ENCODE measurements at regions of chr3 and their contacts with region 1.

Region 1: GRCh38 chr3:97821810-97822775 is at the start of gene CRYBG3:
- DNase-seq: peak in 1 of 2 experiments; percentile 85
- H3K4me3 ChIP-seq: peak within 1 kb of the TSS; percentile 42 to 88 (median 82)
- H3K27ac ChIP-seq: no peak within 1 kb of the TSS
- H3K4me1 ChIP-seq: no peaks in the 10 kb centered on the region
- H3K27me3 ChIP-seq: peaks cover 0 to 22% (median 9%) of the 10 kb centered on the region in 4 experiments; a peak in 5 of 7 replicates
- CTCF ChIP-seq: peak; percentile 11 to 19 (median 15); a peak in 3 of 4 replicates
- EP300 ChIP-seq: no peak
- POLR2A ChIP-seq: peak in 1 of 2 experiments; percentile 74; a peak in 2 of 3 replicates
- RAD21 ChIP-seq: no peak
- total RNA-seq, gene CRYBG3: 8.0 and 9.6 TPM in 2 replicates

Region 2: DNA sequence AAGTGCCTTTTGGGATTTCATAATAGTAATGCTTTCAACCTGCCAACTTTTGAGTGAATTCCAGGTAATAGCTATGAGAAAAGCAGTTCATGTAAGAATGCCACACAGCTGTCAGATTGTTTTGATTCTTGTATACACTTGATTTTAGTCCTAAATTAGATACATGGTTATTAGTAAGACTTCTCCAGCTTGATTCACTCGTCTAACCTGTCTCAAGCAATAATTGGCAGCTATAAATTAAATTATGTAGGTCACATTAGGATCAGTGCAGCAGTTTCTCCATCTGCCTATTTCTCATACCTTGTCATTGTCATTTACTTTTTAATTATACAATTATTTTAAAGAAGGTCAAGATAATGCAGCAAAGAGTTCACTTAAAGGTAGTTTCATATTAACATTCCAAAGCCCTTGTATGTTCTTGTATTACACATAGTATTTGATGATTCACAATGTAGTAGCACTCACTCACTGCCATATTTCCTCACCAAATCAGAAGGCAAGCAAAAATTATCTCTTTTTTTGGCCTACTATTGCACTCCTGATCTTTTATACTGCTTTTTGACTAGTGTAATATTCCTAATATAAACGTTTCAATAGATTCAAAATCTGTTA is 11.2 kb before region 1 on chr3:
- CTCF ChIA-PET with region 1: interaction called, 12 read pairs
- POLR2A ChIA-PET with region 1: interaction called, 4 read pairs
- DNase-seq: no peak
- H3K4me3 ChIP-seq: no peak overlapping the region
- H3K27ac ChIP-seq: no peak overlapping the region
- H3K4me1 ChIP-seq: no peaks in the 10 kb centered on the region
- H3K27me3 ChIP-seq: no peaks in the 10 kb centered on the region
- CTCF ChIP-seq: no peak
- EP300 ChIP-seq: no peak
- POLR2A ChIP-seq: no peak
- RAD21 ChIP-seq: no peak

Region 3: GRCh38 chr3:97838393-97838792 is 16.3 kb after region 1 on chr3:
- CTCF ChIA-PET with region 1: interaction called, 11 read pairs
- POLR2A ChIA-PET with region 1: no interaction called
- DNase-seq: no peak
- H3K4me3 ChIP-seq: no peak overlapping the region
- H3K27ac ChIP-seq: no peak overlapping the region
- H3K4me1 ChIP-seq: no peaks in the 10 kb centered on the region
- H3K27me3 ChIP-seq: no peaks in the 10 kb centered on the region
- CTCF ChIP-seq: no peak
- EP300 ChIP-seq: no peak
- POLR2A ChIP-seq: no peak
- RAD21 ChIP-seq: no peak

Region 4: GRCh38 chr3:97848779-97849178 is 26.7 kb after region 1 on chr3:
- CTCF ChIA-PET with region 1: no interaction called
- POLR2A ChIA-PET with region 1: no interaction called
- DNase-seq: no peak
- H3K4me3 ChIP-seq: no peak overlapping the region
- H3K27ac ChIP-seq: no peak overlapping the region
- H3K4me1 ChIP-seq: no peaks in the 10 kb centered on the region
- H3K27me3 ChIP-seq: peaks cover 0 to 1% (median 0%) of the 10 kb centered on the region in 4 experiments; a peak in 1 of 7 replicates
- CTCF ChIP-seq: no peak
- EP300 ChIP-seq: no peak
- POLR2A ChIP-seq: no peak
- RAD21 ChIP-seq: no peak

Region 5: GRCh38 chr3:97910931-97911351 is 88.8 kb after region 1 on chr3:
- CTCF ChIA-PET with region 1: no interaction called
- POLR2A ChIA-PET with region 1: no interaction called
- DNase-seq: no peak
- H3K4me3 ChIP-seq: no peak overlapping the region
- H3K27ac ChIP-seq: no peak overlapping the region
- H3K4me1 ChIP-seq: peaks cover 0 to 3% (median 0%) of the 10 kb centered on the region in 4 experiments; a peak in 1 of 7 replicates
- H3K27me3 ChIP-seq: no peaks in the 10 kb centered on the region
- CTCF ChIP-seq: no peak
- EP300 ChIP-seq: no peak
- POLR2A ChIP-seq: no peak
- RAD21 ChIP-seq: no peak

Measured in H1 (cell line).